ENCODE measurements at regions of chr2 and their contacts with region 1.

Region 1: GRCh38 chr2:154439156-154439555 is 259.3 kb upstream of the KCNJ3 start:
- DNase-seq: no peak
- ATAC-seq: no peak
- H3K4me3 ChIP-seq: no peak overlapping the region
- H3K27ac ChIP-seq: no peak overlapping the region
- H3K4me1 ChIP-seq: no peaks in the 10 kb centered on the region
- H3K27me3 ChIP-seq: no peaks in the 10 kb centered on the region
- CTCF ChIP-seq: peak in 1 of 3 experiments; percentile 35; a peak in 2 of 6 replicates
- EP300 ChIP-seq: no peak
- POLR2A ChIP-seq: no peak
- RAD21 ChIP-seq: no peak

Region 2: DNA sequence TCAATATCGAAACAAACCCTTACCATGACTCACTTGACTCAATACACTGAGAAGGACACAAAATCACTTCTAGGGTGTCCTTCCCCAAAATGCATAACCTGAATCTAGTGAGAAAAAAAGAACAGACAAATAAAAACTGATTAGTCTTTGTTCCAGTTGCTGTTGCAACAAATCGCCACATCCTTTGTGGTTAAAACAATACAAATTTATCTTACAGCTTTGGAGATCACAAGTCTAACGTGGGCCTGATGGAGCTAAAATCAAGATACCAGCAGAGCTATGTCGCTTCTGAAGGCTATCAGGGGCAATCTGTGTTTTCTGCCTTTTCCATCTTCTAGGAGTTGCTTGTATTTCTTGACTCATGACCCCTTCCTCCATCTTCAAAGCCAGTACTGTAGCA is 801.0 kb after region 1 on chr2:
- CTCF ChIA-PET with region 1: no interaction called
- POLR2A ChIA-PET with region 1: no interaction called
- RAD21 ChIA-PET with region 1: no interaction called
- SMC1A ChIA-PET with region 1: no interaction called
- in situ Hi-C with region 1: loop called (anchors 25 kb)
- intact Hi-C with region 1: no loop called
- DNase-seq: no peak
- ATAC-seq: no peak
- H3K4me3 ChIP-seq: no peak overlapping the region
- H3K27ac ChIP-seq: no peak overlapping the region
- H3K4me1 ChIP-seq: no peaks in the 10 kb centered on the region
- H3K27me3 ChIP-seq: no peaks in the 10 kb centered on the region; a peak in 1 of 4 replicates
- CTCF ChIP-seq: no peak
- EP300 ChIP-seq: no peak
- POLR2A ChIP-seq: no peak
- RAD21 ChIP-seq: no peak

Measured in GM12878 (cell line).